ENCODE measurements at regions of chr12 and their contacts with region 1.

Region 1: GRCh38 chr12:123983822-123984485 is 10.9 kb downstream of the ZNF664 start:
- DNase-seq: peak; percentile 84
- ATAC-seq: peak; percentile 93
- H3K4me3 ChIP-seq: no peak overlapping the region
- H3K27ac ChIP-seq: no peak overlapping the region
- H3K4me1 ChIP-seq: no peaks in the 10 kb centered on the region
- H3K27me3 ChIP-seq: no peaks in the 10 kb centered on the region
- CTCF ChIP-seq: peak; percentile 96

Region 2: DNA sequence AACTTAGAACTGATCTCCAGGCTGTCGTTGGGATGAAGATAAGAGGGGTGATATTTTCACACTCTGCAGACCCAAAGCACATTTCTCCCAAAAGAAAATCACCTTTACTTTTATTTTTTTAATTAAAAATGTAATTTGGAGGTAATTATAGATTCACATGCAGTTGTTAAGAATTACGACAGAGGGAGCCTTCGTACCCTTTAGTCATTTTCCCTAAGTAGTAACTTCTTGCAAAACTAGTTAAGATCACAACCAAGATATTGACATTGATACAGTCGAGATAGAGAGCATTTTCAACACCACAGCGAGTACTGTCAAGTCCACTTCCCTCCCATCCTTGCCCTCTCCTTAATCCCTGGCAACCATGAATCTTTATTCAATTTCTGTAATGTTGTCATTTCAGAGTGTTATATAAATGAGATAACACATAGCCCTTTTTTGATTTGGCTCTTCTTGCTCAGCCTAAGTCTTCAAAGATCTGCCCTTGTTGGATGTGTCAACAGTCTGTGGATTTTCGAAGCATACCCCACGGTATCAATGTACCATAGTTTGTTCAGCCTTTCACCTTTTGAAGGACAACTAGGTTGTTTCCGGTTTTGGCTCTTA is 182.3 kb before region 1 on chr12:
- CTCF ChIA-PET with region 1: no interaction called
- POLR2A ChIA-PET with region 1: no interaction called
- intact Hi-C with region 1: loop called (anchors 1 kb)
- DNase-seq: peak; percentile 72
- ATAC-seq: peak; percentile 62
- H3K4me3 ChIP-seq: no peak overlapping the region
- H3K27ac ChIP-seq: no peak overlapping the region
- H3K4me1 ChIP-seq: no peaks in the 10 kb centered on the region
- H3K27me3 ChIP-seq: no peaks in the 10 kb centered on the region
- CTCF ChIP-seq: peak; percentile 76

Region 3: GRCh38 chr12:124279846-124280360 is 295.9 kb after region 1 on chr12:
- CTCF ChIA-PET with region 1: no interaction called
- POLR2A ChIA-PET with region 1: no interaction called
- intact Hi-C with region 1: no loop called
- DNase-seq: no peak
- ATAC-seq: peak; percentile 33
- H3K4me3 ChIP-seq: no peak overlapping the region
- H3K27ac ChIP-seq: no peak overlapping the region
- H3K4me1 ChIP-seq: no peaks in the 10 kb centered on the region
- H3K27me3 ChIP-seq: peaks cover 100% of the 10 kb centered on the region
- CTCF ChIP-seq: no peak

Measured in PC-3 (cell line).